WTC11 (cell line): ENCODE measurements at regions of chr19 and their contacts with region 1.

Region 1: GRCh38 chr19:48110350-48110966 is at the start of gene PLA2G4C:
- DNase-seq: peak; percentile 89
- ATAC-seq: peak; percentile 65
- H3K4me3 Mint-ChIP-seq: peak within 1 kb of the TSS; percentile 71
- H3K27ac Mint-ChIP-seq: no peak within 1 kb of the TSS; the same call in 1 of the 2 replicates
- H3K4me1 Mint-ChIP-seq: peaks cover 5% of the 10 kb centered on the region
- H3K27me3 Mint-ChIP-seq: peaks cover 6% of the 10 kb centered on the region; the same call in 1 of the 2 replicates
- CTCF ChIP-seq: no peak
- total RNA-seq, gene PLA2G4C: 4.5 to 10.6 TPM (median 8.6 TPM) in 3 replicates

Region 2: GRCh38 chr19:48053856-48054255 is 56.6 kb before region 1 on chr19:
- CTCF ChIA-PET with region 1: no interaction called
- POLR2A ChIA-PET with region 1: no interaction called
- DNase-seq: no peak
- ATAC-seq: no peak
- H3K4me3 Mint-ChIP-seq: no peak overlapping the region
- H3K27ac Mint-ChIP-seq: no peak overlapping the region
- H3K4me1 Mint-ChIP-seq: no peaks in the 10 kb centered on the region
- H3K27me3 Mint-ChIP-seq: no peaks in the 10 kb centered on the region; the same call in 1 of the 2 replicates
- CTCF ChIP-seq: no peak

Region 3: DNA sequence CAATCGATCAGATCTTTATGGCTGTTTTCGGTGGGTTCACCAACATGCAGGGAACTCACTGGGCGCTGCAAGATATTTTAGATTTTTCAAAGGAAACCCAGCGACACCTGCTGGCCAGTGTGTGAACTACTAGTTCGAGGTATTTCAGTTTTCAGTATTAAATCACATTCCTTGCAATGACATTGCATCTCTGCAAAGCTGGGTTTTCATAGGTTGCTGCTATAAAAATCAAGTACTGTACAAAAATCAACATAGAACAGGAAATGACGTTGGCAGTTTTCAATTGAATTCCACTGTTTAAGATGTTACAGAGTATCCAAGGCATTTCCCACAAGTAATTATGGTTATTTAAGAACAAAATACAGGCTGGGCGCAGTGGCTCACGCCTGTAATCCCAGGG is 42.1 kb after region 1 on chr19:
- CTCF ChIA-PET with region 1: interaction called, 10 read pairs
- POLR2A ChIA-PET with region 1: no interaction called
- DNase-seq: peak; percentile 72
- ATAC-seq: peak; percentile 59
- H3K4me3 Mint-ChIP-seq: no peak overlapping the region
- H3K27ac Mint-ChIP-seq: peak overlapping the region; percentile 57; the same call in 1 of the 2 replicates
- H3K4me1 Mint-ChIP-seq: no peaks in the 10 kb centered on the region
- H3K27me3 Mint-ChIP-seq: no peaks in the 10 kb centered on the region
- CTCF ChIP-seq: peak; percentile 79